Activated T-helper 1 cell treated with anti-CD3 and anti-CD28 coated beads, Interleukin-12 subunit alpha, Interleukin-12 subunit beta, Interleukin-2, Interleukin-4 antibody, amounts not matched to agents 30 ng/mL and 10 ng/mL and 1 ng/mL, durations not matched to agents 14 hours and 24 hours and 36 hours (primary cell): ENCODE measurements at regions of chr10 and their contacts with region 1.

Region 1: GRCh38 chr10:58268870-58269605 is at the start of gene CISD1:
- DNase-seq: peak; percentile 95
- H3K4me3 Mint-ChIP-seq: peak within 1 kb of the TSS; percentile 94
- H3K27ac Mint-ChIP-seq: peak within 1 kb of the TSS; percentile 98
- H3K4me1 Mint-ChIP-seq: peaks cover 40% of the 10 kb centered on the region
- H3K27me3 Mint-ChIP-seq: no peaks in the 10 kb centered on the region
- total RNA-seq, gene CISD1: 50.4 and 56.0 TPM in 2 replicates

Region 2: GRCh38 chr10:58220769-58221451 is 48.1 kb before region 1 on chr10:
- intact Hi-C with region 1: loop called (anchors 5 kb)
- DNase-seq: no peak
- H3K4me3 Mint-ChIP-seq: no peak overlapping the region
- H3K27ac Mint-ChIP-seq: no peak overlapping the region
- H3K4me1 Mint-ChIP-seq: no peaks in the 10 kb centered on the region
- H3K27me3 Mint-ChIP-seq: no peaks in the 10 kb centered on the region

Region 3: DNA sequence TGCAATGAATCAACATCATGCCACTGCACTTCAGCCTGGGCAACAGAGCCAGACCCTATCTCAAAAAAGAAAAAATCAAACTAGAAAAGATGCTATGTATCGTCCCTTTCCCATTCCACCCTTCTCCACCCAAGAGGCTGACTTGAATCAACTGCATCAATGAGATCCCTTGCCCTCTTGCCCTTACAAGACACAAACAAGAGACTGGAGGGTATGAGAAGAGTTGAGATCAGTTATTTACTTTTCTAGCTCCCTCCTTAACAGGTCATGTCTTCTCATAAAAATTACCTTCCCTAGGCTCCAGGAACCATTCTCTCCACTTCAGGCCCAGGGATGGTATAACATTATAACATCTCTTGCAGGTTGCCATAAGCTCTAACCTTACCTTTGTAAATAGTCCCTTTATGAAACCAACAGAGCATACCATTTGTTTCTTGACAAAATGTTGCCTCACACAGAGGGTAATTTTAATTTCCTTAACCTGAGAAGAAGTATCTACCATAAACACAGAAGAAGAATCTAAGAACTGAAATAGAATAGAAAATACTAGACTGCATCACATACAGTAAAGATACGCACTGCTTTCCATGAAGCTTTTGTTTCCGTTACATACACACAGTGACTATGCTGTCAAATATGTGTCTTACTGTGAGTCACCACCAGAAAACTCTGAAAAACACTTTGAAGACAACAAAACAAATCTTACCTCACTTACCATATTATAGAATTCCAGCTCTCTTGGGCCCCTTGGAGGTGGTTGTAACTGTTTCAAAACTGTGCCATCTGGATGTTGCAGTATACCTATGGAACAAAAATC is 31.8 kb before region 1 on chr10:
- intact Hi-C with region 1: loop called (anchors 1 kb)
- DNase-seq: no peak
- H3K4me3 Mint-ChIP-seq: no peak overlapping the region
- H3K27ac Mint-ChIP-seq: peak overlapping the region; percentile 93
- H3K4me1 Mint-ChIP-seq: peaks cover 43% of the 10 kb centered on the region
- H3K27me3 Mint-ChIP-seq: peaks cover 2% of the 10 kb centered on the region

Region 4: GRCh38 chr10:58254644-58255043 is 14.4 kb before region 1 on chr10:
- intact Hi-C with region 1: no loop called
- DNase-seq: no peak
- H3K4me3 Mint-ChIP-seq: no peak overlapping the region
- H3K27ac Mint-ChIP-seq: no peak overlapping the region
- H3K4me1 Mint-ChIP-seq: peaks cover 21% of the 10 kb centered on the region
- H3K27me3 Mint-ChIP-seq: no peaks in the 10 kb centered on the region

Region 5: GRCh38 chr10:58282615-58283014 is 13.6 kb after region 1 on chr10:
- intact Hi-C with region 1: loop called (anchors 1 kb)
- DNase-seq: peak; percentile 30
- H3K4me3 Mint-ChIP-seq: peak overlapping the region; percentile 23
- H3K27ac Mint-ChIP-seq: peak overlapping the region; percentile 10
- H3K4me1 Mint-ChIP-seq: peaks cover 35% of the 10 kb centered on the region
- H3K27me3 Mint-ChIP-seq: no peaks in the 10 kb centered on the region

Region 6: GRCh38 chr10:58334817-58335305 is 65.8 kb after region 1 on chr10 and contains the start of gene UBE2D1:
- intact Hi-C with region 1: loop called (anchors 1 kb)
- DNase-seq: peak; percentile 73
- H3K4me3 Mint-ChIP-seq: peak within 1 kb of the TSS; percentile 92
- H3K27ac Mint-ChIP-seq: peak within 1 kb of the TSS; percentile 80
- H3K4me1 Mint-ChIP-seq: peaks cover 14% of the 10 kb centered on the region
- H3K27me3 Mint-ChIP-seq: peaks cover 8% of the 10 kb centered on the region
- total RNA-seq, gene UBE2D1: 17.9 and 19.6 TPM in 2 replicates

Region 7: DNA sequence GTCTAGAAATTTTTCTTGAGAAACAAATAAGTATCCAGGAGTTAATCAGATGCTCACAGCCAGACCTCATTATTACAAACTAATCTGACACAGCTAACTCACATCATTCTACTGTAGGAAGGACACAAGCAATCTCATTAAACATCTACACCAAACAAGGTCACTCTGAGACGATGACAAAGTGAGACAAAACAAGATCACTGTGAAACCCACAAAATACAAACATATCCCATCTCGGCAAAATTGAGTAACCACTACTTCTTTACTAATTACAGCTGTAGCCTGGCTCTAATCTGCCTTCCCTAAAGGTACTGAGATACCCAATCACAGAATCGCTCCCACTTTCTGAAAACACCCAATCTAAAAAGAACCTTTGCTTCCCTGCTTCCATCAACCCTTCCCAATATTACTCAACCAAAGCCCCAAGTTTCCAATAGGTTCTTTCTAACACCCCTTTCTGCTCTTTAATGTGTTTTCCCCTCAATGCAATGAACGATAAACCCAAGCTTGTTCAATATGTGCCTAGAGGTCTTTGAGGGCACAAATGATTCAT is 1610.4 kb after region 1 on chr10:
- intact Hi-C with region 1: loop called (anchors 5 kb)
- DNase-seq: no peak
- H3K4me3 Mint-ChIP-seq: peak overlapping the region; percentile 62
- H3K27ac Mint-ChIP-seq: peak overlapping the region; percentile 93
- H3K4me1 Mint-ChIP-seq: peaks cover 84% of the 10 kb centered on the region
- H3K27me3 Mint-ChIP-seq: no peaks in the 10 kb centered on the region